Dendritic cell treated with granulocyte-macrophage colony-stimulating factor and Interleukin-4, amounts not matched to agents 40 ng/mL and 50 ng/mL, for 4 days (primary cell): ENCODE measurements at regions of chr14 and their contacts with region 1.

Region 1: DNA sequence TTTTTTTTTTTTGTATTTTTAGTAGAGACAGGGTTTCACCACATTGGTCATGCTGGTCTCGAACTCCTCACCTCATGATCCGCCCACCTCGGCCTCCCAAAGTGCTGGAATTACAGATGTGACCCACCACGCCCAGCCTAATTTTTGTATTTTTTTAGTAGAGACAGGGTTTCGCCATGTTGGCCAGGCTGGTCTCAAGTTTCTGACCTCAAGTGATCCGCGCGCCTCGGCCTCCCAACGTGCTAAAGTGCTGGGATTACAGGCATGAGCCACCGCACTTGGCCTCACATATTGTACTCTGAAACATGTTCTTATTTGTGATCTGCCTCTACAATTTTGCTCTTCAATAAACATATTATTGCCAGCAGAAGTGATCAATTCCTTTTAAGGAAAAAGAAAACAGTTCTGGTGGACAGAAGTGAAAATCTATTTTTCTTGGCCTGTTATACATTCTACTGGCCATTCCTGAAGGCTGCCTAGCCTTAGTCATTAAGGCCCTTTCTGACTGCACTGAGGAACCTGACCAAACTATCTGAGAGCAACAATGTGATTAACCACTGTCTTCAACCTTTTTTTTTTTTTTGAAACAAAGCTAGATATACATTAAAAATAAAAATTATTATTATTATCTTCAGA is 36.1 kb downstream of the SNX6 start:
- H3K4me3 Mint-ChIP-seq: no peak overlapping the region
- H3K27ac Mint-ChIP-seq: no peak overlapping the region
- H3K4me1 Mint-ChIP-seq: no peaks in the 10 kb centered on the region
- H3K27me3 Mint-ChIP-seq: no peaks in the 10 kb centered on the region

Region 2: DNA sequence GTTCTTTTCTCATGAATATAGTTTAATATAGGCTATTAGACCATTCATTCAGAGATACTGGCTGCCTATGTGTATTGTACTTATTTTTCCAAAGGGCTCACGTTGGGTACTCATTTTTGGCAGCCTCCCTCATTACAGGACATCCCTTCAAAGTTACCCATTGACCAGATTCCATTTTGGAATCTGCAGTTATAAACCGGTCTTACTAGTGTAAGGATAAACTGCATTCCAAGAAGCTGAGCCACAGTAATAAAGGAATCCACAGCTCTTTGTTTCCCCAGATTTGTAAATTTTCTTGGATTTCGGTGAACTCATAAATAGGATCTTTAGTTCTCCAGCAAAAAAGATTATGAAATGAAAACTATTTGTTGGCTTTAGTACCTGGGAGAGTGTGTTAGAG is 139.4 kb after region 1 on chr14:
- intact Hi-C with region 1: no loop called
- H3K4me3 Mint-ChIP-seq: no peak overlapping the region
- H3K27ac Mint-ChIP-seq: no peak overlapping the region
- H3K4me1 Mint-ChIP-seq: no peaks in the 10 kb centered on the region
- H3K27me3 Mint-ChIP-seq: no peaks in the 10 kb centered on the region

Region 3: DNA sequence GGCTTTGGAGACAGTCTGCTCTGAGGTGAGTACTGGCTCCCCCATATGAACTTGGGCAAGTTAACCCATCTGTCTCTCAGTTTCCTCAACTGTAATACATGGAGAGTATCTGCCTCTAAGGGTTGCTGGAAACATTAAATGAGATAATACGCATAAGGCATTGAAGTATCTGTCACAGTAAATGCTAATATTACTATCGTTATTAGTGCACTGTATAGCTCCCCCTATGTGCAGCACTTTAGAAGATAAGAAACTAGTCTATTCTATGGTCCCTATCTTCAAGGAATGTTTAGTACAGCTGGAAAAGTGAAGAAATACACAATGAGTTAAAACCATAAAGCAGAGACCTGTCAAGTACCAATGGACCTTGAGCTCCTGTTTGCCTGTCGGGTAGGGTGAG is 172.2 kb after region 1 on chr14:
- intact Hi-C with region 1: loop called (anchors 10 kb)
- H3K4me3 Mint-ChIP-seq: no peak overlapping the region
- H3K27ac Mint-ChIP-seq: peak overlapping the region; percentile 55
- H3K4me1 Mint-ChIP-seq: no peaks in the 10 kb centered on the region
- H3K27me3 Mint-ChIP-seq: no peaks in the 10 kb centered on the region